ENCODE measurements at regions of chr11 and their contacts with region 1.

Region 1: DNA sequence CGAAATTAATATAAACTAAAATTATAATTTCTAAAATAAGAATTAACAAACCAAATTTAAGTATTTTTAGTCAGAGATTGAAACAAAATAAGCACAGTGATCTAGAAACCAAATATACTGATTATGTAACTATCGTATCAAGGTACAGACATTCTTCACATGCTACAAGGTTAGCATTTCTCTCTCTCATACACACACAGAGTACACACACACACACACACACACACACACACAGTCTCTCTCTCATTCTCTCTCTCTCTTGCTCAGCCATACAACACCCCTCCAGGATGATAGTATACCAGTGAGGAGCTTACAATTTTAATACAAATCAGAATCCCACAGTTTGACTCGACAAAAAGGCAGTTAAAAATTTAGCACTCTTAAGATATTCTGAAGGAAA is 66.0 kb downstream of the RDX start:
- DNase-seq: no peak
- H3K4me3 Mint-ChIP-seq: no peak overlapping the region
- H3K27ac Mint-ChIP-seq: no peak overlapping the region
- H3K4me1 Mint-ChIP-seq: no peaks in the 10 kb centered on the region
- H3K27me3 Mint-ChIP-seq: no peaks in the 10 kb centered on the region
- CTCF ChIP-seq: no peak

Region 2: DNA sequence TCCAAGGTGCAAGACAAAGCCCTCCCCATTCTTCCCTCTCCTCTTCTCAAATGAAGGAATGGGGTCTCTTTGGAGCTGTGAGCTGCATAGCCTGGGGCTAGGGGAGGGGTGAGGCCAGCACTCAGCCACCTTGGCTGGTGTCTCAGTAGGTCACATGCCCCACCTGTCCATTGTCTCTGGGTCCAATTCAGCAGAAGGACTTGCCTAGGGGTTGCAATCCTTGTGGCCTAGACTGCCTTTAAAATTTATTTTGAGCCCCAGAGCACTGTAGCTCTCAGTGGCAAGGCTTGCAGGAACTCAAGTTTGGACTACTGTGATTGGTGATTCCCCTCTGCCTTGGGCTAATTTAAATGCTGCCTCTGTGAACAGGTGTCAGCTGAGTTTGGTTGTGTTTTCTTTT is 1228.8 kb before region 1 on chr11:
- CTCF ChIA-PET with region 1: interaction called, 11 read pairs
- intact Hi-C with region 1: no loop called
- DNase-seq: no peak
- H3K4me3 Mint-ChIP-seq: no peak overlapping the region
- H3K27ac Mint-ChIP-seq: no peak overlapping the region
- H3K4me1 Mint-ChIP-seq: no peaks in the 10 kb centered on the region
- H3K27me3 Mint-ChIP-seq: no peaks in the 10 kb centered on the region
- CTCF ChIP-seq: no peak

Region 3: GRCh38 chr11:110287537-110287936 is 57.2 kb after region 1 on chr11:
- CTCF ChIA-PET with region 1: no interaction called
- intact Hi-C with region 1: loop called (anchors 10 kb)
- DNase-seq: no peak
- H3K4me3 Mint-ChIP-seq: no peak overlapping the region
- H3K27ac Mint-ChIP-seq: no peak overlapping the region
- H3K4me1 Mint-ChIP-seq: peaks cover 8% of the 10 kb centered on the region
- H3K27me3 Mint-ChIP-seq: no peaks in the 10 kb centered on the region
- CTCF ChIP-seq: no peak

Measured in Calu3 (cell line).